Right cardiac atrium (tissue), 5 donors: ENCODE measurements at regions of chr9 and their contacts with region 1.

Region 1: GRCh38 chr9:31639451-31639850 is 745.0 kb upstream of the ACO1 start:
- DNase-seq: no peak
- ATAC-seq: no peak
- H3K4me3 ChIP-seq: no peak overlapping the region
- H3K27ac ChIP-seq: no peak overlapping the region
- H3K4me1 ChIP-seq: no peaks in the 10 kb centered on the region
- H3K27me3 ChIP-seq: no peaks in the 10 kb centered on the region

Region 2: GRCh38 chr9:31377358-31377757 is 262.1 kb before region 1 on chr9:
- intact Hi-C with region 1: no loop called
- DNase-seq: no peak
- ATAC-seq: no peak
- H3K4me3 ChIP-seq: no peak overlapping the region
- H3K27ac ChIP-seq: no peak overlapping the region
- H3K4me1 ChIP-seq: no peaks in the 10 kb centered on the region
- H3K27me3 ChIP-seq: no peaks in the 10 kb centered on the region

Region 3: DNA sequence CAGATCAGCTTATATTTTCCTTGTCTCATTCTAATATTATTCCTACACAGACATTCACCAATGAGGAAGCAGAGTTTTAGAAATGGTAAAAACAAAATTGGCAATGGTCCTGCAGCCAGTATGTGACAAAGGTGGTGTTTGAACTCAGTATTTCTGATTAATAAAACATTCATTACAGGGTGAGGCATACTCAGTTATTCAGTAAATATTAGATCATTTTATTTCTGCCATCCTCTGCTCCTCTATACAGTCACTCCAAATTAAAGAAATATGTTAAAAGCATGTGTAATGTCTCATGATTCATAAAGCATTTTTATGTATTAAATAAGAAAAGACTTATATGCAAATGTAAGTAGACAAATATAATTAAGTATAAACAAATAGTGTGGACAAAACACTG is 60.4 kb after region 1 on chr9:
- intact Hi-C with region 1: loop called in 1 of 4 experiments (anchors 10 kb)
- DNase-seq: no peak
- ATAC-seq: no peak
- H3K4me3 ChIP-seq: no peak overlapping the region
- H3K27ac ChIP-seq: no peak overlapping the region
- H3K4me1 ChIP-seq: no peaks in the 10 kb centered on the region
- H3K27me3 ChIP-seq: no peaks in the 10 kb centered on the region

Region 4: GRCh38 chr9:32326146-32326545 is 686.7 kb after region 1 on chr9:
- intact Hi-C with region 1: no loop called
- DNase-seq: no peak
- ATAC-seq: no peak
- H3K4me3 ChIP-seq: no peak overlapping the region
- H3K27ac ChIP-seq: no peak overlapping the region
- H3K4me1 ChIP-seq: no peaks in the 10 kb centered on the region
- H3K27me3 ChIP-seq: no peaks in the 10 kb centered on the region

Region 5: GRCh38 chr9:32431940-32432555 is 792.6 kb after region 1 on chr9:
- intact Hi-C with region 1: no loop called
- DNase-seq: peak; percentile 40 to 72 (median 63)
- ATAC-seq: peak in 1 of 2 donors; percentile 67
- H3K4me3 ChIP-seq: no peak overlapping the region
- H3K27ac ChIP-seq: no peak overlapping the region
- H3K4me1 ChIP-seq: no peaks in the 10 kb centered on the region
- H3K27me3 ChIP-seq: no peaks in the 10 kb centered on the region